A673 (cell line): ENCODE measurements at regions of chr12 and their contacts with region 1.

Region 1: DNA sequence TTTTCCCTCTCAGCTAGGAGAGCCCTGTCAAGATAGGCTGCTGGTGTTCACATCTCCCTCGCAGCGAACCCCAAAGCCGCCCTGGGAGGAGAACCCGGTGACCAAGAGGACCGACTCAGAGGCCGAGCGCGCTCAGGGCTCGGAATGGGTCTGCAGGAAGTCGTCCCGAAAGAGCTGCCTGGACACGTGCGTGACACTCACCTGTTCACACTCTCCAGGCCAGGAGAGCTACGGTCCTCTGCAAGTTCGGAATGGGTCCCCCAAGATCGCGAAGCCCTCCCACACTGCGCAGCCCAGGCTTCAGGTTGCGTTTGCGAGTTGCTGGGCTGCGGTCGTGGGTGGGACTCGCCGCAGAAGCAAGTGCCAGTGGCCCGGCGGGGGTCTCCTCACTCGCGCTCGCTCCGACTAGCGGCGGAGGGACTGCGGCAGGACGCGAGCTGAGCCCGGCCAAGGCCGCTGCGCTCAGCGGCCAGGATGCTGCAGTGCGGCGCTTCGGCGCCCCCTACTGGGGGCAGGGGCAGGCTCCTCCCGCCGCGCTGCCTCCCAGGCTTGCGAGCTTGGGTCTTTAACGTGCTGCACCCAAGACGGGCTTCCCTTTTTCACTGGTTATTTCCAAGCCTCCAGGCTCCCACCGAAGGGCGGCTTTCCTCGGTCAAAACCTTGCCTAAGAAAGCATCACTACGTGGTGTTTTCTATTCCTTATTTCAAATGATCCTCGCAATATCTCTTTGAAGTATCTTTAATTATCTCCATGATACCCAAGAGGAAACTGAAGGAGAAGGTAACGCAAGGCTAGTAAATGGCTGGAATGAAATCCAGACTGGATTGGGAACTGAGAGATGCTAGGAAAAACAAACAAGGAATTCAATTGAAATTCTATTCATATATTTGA is at the start of gene RERG:
- DNase-seq: peak; percentile 85
- H3K4me3 ChIP-seq: peak within 1 kb of the TSS; percentile 28
- H3K27ac ChIP-seq: no peak within 1 kb of the TSS
- H3K4me1 ChIP-seq: peaks cover 5% of the 10 kb centered on the region
- H3K27me3 ChIP-seq: no peaks in the 10 kb centered on the region
- CTCF ChIP-seq: peak; percentile 97
- total RNA-seq, gene RERG: 0.35 TPM in 1 of 2 replicates, not detected in the other

Region 2: GRCh38 chr12:14505626-14506596 is 715.3 kb before region 1 on chr12:
- CTCF ChIA-PET with region 1: no interaction called
- POLR2A ChIA-PET with region 1: no interaction called
- intact Hi-C with region 1: no loop called
- DNase-seq: no peak
- H3K4me3 ChIP-seq: no peak overlapping the region
- H3K27ac ChIP-seq: no peak overlapping the region
- H3K4me1 ChIP-seq: no peaks in the 10 kb centered on the region
- H3K27me3 ChIP-seq: no peaks in the 10 kb centered on the region
- CTCF ChIP-seq: no peak

Region 3: GRCh38 chr12:14845350-14845750 is 375.9 kb before region 1 on chr12:
- CTCF ChIA-PET with region 1: no interaction called
- POLR2A ChIA-PET with region 1: no interaction called
- intact Hi-C with region 1: loop called (anchors 5 kb)
- DNase-seq: peak; percentile 79
- H3K4me3 ChIP-seq: no peak overlapping the region
- H3K27ac ChIP-seq: no peak overlapping the region
- H3K4me1 ChIP-seq: no peaks in the 10 kb centered on the region
- H3K27me3 ChIP-seq: no peaks in the 10 kb centered on the region
- CTCF ChIP-seq: peak; percentile 84

Region 4: DNA sequence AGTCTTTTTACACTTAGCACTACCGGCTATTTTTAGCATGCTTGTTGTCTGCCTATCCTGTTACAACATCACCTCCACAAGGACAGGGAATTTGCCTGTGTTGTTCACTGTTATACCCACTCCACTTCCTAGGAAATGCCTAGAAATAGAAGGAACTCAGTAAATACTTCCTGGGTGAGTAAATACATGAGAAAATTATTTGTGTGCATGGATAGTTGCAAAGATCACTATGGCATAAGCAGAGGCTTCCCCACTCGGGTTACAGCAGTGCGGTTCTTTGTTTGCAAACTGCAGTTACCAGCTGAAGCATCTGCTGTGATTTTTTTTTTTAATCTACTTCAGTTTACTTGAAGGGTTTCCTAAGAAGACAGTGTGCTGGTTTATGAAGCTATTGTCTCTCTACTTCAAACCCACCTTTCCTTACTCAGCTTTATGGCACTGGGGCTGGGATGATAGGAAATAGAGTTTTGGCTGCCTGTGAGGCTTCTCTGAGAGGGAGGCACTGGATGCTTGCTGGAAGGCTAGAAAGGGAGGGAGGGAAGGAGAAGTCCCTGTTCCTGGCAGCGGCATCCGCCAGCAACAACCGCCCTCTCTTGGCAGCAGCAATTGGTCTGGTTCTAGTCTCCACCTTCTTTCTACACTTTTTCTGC is 219.4 kb before region 1 on chr12:
- CTCF ChIA-PET with region 1: no interaction called
- POLR2A ChIA-PET with region 1: no interaction called
- intact Hi-C with region 1: loop called (anchors 2 kb)
- DNase-seq: no peak
- H3K4me3 ChIP-seq: no peak overlapping the region
- H3K27ac ChIP-seq: no peak overlapping the region
- H3K4me1 ChIP-seq: no peaks in the 10 kb centered on the region
- H3K27me3 ChIP-seq: no peaks in the 10 kb centered on the region
- CTCF ChIP-seq: no peak

Region 5: DNA sequence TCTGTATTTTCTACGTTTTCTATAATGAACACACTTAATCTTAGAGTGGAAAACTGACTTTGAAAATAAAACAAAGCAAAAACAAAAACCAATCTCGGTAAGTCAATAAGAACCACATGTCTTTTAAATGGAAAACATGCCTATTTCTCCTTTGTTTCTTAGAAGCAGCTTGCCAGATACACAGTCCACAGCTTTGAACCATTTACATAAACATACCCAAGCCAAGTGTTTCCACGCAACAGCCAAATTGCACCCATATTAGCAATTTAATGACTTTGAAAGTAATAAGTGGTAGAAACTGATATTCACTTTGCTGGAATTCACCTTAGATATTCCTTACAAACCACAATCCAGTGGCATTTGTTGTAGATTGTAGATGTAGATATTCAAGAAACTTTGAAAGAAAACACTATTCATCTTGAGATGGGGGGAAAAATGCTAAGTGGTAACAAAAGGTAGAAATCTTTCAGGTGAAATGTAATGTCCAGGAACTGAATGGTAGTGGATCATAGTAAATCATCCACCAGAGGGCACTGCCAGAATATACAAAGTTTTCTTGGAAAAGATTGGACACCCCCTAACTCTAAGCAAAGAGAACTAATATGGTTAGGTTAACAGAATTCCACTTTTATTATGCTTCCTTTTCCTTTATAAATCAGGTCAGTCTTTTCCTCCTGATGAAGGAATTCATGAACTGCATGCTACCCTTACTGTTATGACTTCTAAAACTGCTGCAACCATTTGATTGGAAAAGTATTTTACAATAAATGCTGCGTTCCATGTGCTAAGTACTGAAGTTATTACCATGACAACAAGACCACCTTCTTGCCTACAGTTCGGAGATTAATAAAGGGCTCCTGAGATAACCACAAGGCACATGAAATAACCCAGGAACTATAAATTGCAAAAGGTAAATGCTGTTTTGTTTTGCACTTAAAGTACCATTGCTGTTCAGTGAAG is 69.8 kb before region 1 on chr12:
- CTCF ChIA-PET with region 1: interaction called, 7 read pairs
- POLR2A ChIA-PET with region 1: no interaction called
- intact Hi-C with region 1: loop called (anchors 1 kb)
- DNase-seq: peak; percentile 44
- H3K4me3 ChIP-seq: no peak overlapping the region
- H3K27ac ChIP-seq: no peak overlapping the region
- H3K4me1 ChIP-seq: peaks cover 7% of the 10 kb centered on the region
- H3K27me3 ChIP-seq: no peaks in the 10 kb centered on the region
- CTCF ChIP-seq: peak; percentile 64